Panc1 (cell line): ENCODE measurements at regions of chr1 and their contacts with region 1.

Region 1: DNA sequence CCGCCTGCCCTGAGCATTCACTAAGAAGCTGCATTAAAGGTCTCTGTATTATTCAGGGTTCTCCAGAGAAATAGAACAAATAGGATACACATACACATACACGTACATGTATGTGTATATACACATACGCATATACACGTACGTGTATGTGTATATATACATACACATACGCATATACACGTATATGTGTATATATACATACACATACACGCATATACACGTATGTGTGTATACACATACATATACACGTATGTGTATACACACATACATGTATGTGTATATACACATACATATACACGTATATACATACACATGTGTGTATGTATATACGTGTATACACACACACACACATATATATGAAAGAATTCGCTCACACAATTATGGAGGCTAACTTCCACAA is 108.9 kb upstream of the BARHL2 start:
- DNase-seq: no peak
- ATAC-seq: no peak
- H3K4me3 ChIP-seq: no peak overlapping the region
- H3K27ac ChIP-seq: no peak overlapping the region
- H3K4me1 ChIP-seq: no peaks in the 10 kb centered on the region
- H3K27me3 ChIP-seq: peaks cover 6% of the 10 kb centered on the region
- CTCF ChIP-seq: no peak

Region 2: GRCh38 chr1:90850898-90851710 is 25.1 kb after region 1 on chr1:
- CTCF ChIA-PET with region 1: interaction called, 13 read pairs
- POLR2A ChIA-PET with region 1: no interaction called
- in situ Hi-C with region 1: no loop called
- intact Hi-C with region 1: no loop called
- DNase-seq: no peak
- ATAC-seq: peak; percentile 99
- H3K4me3 ChIP-seq: peak overlapping the region; percentile 75 to 85
- H3K27ac ChIP-seq: peak overlapping the region; percentile 71
- H3K4me1 ChIP-seq: 0 out of 2 replicates have a peak, but pooled peaks cover 3% of the 10 kb centered on the region
- H3K27me3 ChIP-seq: no peaks in the 10 kb centered on the region
- CTCF ChIP-seq: peak; percentile 96